A673 (cell line): ENCODE measurements at regions of chr10 and their contacts with region 1.

Region 1: GRCh38 chr10:13074561-13075451 is 25.2 kb upstream of the OPTN start:
- DNase-seq: peak; percentile 85
- H3K4me3 ChIP-seq: no peak overlapping the region
- H3K27ac ChIP-seq: no peak overlapping the region
- H3K4me1 ChIP-seq: peaks cover 2% of the 10 kb centered on the region
- H3K27me3 ChIP-seq: no peaks in the 10 kb centered on the region
- CTCF ChIP-seq: peak; percentile 94

Region 2: DNA sequence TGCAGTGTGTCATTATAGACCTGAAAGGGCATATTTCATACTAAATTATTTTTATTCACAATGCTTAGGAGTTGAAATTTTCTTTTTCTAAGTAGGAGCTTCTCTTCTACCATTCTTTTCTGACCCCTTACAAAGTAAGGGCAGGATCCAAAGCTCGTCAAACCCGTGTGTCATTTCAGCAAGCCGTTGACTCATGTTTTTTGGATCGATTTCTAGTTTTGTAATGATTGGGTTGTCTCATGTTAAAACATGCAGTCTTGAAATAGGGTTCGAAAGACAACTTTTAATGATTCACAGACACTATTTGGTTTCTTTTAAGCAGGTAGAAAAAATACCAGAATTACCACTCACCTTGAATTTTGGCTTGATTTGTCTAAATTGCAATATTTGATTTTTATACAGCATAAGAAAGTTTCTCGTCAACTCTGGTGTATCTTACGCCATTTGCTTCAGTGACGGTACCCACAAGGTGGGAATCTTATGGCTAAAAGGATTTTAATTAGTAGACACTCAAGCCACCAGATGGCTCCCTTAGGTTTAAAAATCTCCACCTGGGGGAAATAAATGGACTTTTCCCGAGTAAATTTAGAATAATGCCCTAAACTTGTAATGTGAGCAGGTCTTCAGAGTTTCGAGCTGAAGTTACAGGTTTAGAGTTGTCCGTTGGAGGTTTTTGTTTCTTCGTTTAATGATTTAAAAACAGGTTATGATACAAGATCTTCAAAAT is 356.7 kb before region 1 on chr10:
- CTCF ChIA-PET with region 1: no interaction called
- POLR2A ChIA-PET with region 1: no interaction called
- intact Hi-C with region 1: loop called (anchors 5 kb)
- DNase-seq: no peak
- H3K4me3 ChIP-seq: no peak overlapping the region
- H3K27ac ChIP-seq: no peak overlapping the region
- H3K4me1 ChIP-seq: peaks cover 34% of the 10 kb centered on the region
- H3K27me3 ChIP-seq: no peaks in the 10 kb centered on the region
- CTCF ChIP-seq: peak; percentile 38; the same call in 1 of the 2 replicates

Region 3: DNA sequence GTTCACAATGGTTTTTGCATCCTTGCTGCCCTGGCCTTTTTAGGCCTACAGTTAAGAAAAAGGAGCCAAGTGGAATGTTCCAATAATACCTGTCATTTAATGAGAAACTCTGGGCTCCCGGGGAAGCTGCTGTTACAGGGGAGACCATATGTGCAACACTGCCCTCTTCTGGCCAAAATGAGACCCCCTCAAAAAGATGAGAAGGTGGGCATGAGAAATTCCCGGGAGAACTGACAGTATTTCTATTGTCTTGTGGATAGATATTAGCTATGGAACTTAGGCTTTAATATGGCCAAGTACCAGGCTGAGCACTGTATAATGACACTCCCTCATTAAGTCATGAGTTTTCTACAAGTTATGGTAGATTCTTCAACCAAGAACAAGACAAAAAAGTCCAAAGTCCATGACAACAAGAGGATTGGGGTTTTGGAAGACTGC is 172.7 kb before region 1 on chr10:
- CTCF ChIA-PET with region 1: interaction called, 4 read pairs
- POLR2A ChIA-PET with region 1: no interaction called
- intact Hi-C with region 1: loop called (anchors 10 kb)
- DNase-seq: peak; percentile 81
- H3K4me3 ChIP-seq: no peak overlapping the region
- H3K27ac ChIP-seq: no peak overlapping the region
- H3K4me1 ChIP-seq: no peaks in the 10 kb centered on the region
- H3K27me3 ChIP-seq: no peaks in the 10 kb centered on the region
- CTCF ChIP-seq: peak; percentile 86